ENCODE measurements at regions of chr19 and their contacts with region 1.

Region 1: DNA sequence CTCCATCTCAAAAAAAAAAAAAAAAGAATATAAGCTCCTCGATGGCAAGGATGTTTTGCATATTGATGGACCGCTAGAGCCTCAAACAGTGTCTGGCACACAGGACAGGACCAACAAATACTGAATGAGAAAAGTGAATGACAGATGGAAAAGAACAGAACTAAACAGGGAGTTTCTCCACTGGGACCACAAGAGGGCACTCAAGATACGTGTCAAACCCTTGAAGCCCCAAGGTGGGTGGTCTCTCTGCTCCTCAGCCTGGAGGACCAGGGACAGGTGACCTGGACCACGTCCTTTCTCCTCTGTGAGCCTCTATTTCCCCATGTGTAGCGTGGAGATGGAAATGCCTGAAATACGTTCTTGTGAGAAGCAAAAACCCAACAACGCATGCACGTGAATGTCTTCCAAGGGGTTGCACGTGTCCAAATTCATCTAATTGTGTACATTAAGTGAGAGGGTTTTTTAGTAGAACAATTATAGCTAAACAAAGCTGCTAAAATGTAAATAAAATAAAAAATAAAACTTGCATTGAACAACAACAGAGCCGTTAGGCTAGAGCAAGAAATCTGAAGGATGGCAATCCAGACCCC is 5.7 kb upstream of the CDC42EP5 start:
- DNase-seq: no peak
- H3K4me3 ChIP-seq: no peak overlapping the region
- H3K27ac ChIP-seq: no peak overlapping the region
- H3K4me1 ChIP-seq: peaks cover 3 to 12% (median 4%) of the 10 kb centered on the region in 4 donors
- H3K27me3 ChIP-seq: peaks cover 0 to 67% (median 6%) of the 10 kb centered on the region in 4 donors
- CTCF ChIP-seq: peak; percentile 43 to 59 (median 45)
- EP300 ChIP-seq: no peak
- POLR2A ChIP-seq: no peak

Region 2: GRCh38 chr19:54439174-54439853 is 39.5 kb before region 1 on chr19:
- intact Hi-C with region 1: loop called (anchors 5 kb)
- DNase-seq: no peak
- H3K4me3 ChIP-seq: no peak overlapping the region
- H3K27ac ChIP-seq: no peak overlapping the region
- H3K4me1 ChIP-seq: peaks cover 20 to 37% (median 29%) of the 10 kb centered on the region in 4 donors
- H3K27me3 ChIP-seq: no peaks in the 10 kb centered on the region
- CTCF ChIP-seq: peak in 2 of 3 experiments; percentile 11 to 29
- EP300 ChIP-seq: no peak
- POLR2A ChIP-seq: no peak

Region 3: GRCh38 chr19:54573330-54573872 is 94.6 kb after region 1 on chr19 and contains the start of gene LILRA2:
- intact Hi-C with region 1: no loop called
- DNase-seq: peak; percentile 70
- H3K4me3 ChIP-seq: peak within 1 kb of the TSS in 2 of 4 donors; percentile 3 to 5
- H3K27ac ChIP-seq: no peak within 1 kb of the TSS
- H3K4me1 ChIP-seq: no peaks in the 10 kb centered on the region
- H3K27me3 ChIP-seq: peaks cover 0 to 40% (median 0%) of the 10 kb centered on the region in 4 donors
- CTCF ChIP-seq: no peak
- EP300 ChIP-seq: no peak
- POLR2A ChIP-seq: no peak
- total RNA-seq, gene LILRA2: 0.83 to 4.6 (median 2.3) TPM

Region 4: DNA sequence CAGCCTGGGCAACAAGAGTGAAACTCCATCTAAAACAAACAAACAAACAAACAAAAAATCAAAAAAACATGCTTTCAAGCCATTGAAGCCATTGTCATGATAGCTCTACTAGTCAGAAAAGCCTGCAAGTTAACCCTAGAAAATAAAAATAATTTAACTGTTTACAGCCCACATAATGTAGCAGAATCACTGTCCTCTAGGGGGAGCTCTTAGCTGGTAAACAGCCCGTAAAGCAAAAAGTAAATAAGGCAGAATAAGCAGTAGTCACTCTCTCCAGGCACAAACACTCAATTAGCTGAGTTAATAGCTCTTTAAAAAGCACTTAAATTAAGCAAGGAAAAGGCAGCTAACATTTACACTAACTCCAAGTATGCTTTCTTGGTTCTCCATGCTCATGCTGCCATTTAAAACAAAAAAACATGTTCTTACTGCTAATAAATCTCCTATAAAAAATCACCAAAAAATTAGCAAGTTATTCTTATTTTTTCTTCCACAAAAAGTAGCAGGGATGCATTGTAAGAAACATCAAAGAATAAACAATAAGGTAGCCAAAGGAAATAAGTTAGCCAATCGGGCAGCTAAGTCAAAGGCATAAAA is 195.3 kb after region 1 on chr19:
- intact Hi-C with region 1: loop called (anchors 2 kb)
- DNase-seq: no peak
- H3K4me3 ChIP-seq: no peak overlapping the region
- H3K27ac ChIP-seq: no peak overlapping the region
- H3K4me1 ChIP-seq: no peaks in the 10 kb centered on the region
- H3K27me3 ChIP-seq: peaks cover 0 to 46% (median 0%) of the 10 kb centered on the region in 4 donors
- CTCF ChIP-seq: peak in 2 of 3 experiments; percentile 20 to 40
- EP300 ChIP-seq: no peak
- POLR2A ChIP-seq: no peak